ENCODE measurements at regions of chr9 and their contacts with region 1.

Region 1: DNA sequence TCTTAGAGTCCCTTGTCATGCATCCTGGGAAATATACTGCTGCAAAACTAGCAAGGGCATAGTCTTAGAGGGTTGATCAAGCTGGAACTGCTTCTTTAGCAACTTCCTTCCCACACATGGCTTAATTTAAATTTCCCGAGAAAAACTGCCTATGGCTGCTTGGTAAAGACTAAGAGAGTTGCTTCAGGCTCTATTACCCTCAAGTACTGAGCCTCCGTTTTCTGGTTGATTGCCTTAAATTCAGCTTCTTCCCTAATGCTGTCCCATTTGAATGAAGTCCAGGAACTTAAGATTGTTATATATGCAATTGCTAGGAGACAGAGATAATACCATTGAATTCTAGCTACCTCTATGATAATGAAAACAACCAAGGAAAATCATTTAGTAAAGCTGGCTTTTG is 385.7 kb upstream of the CYLC2 start:
- DNase-seq: no peak
- ATAC-seq: no peak
- H3K4me3 ChIP-seq: no peak overlapping the region
- H3K27ac ChIP-seq: no peak overlapping the region
- H3K4me1 ChIP-seq: no peaks in the 10 kb centered on the region
- H3K27me3 ChIP-seq: no peaks in the 10 kb centered on the region
- CTCF ChIP-seq: no peak
- POLR2A ChIP-seq: no peak
- RAD21 ChIP-seq: no peak

Region 2: GRCh38 chr9:102551346-102551745 is 58.1 kb before region 1 on chr9:
- CTCF ChIA-PET with region 1: no interaction called
- POLR2A ChIA-PET with region 1: no interaction called
- dilution Hi-C with region 1: no loop called
- in situ Hi-C with region 1: loop called (anchors 5 kb)
- intact Hi-C with region 1: no loop called
- DNase-seq: no peak
- ATAC-seq: no peak
- H3K4me3 ChIP-seq: no peak overlapping the region
- H3K27ac ChIP-seq: no peak overlapping the region
- H3K4me1 ChIP-seq: no peaks in the 10 kb centered on the region
- H3K27me3 ChIP-seq: no peaks in the 10 kb centered on the region
- CTCF ChIP-seq: no peak
- POLR2A ChIP-seq: no peak
- RAD21 ChIP-seq: no peak

Measured in IMR-90 (cell line).